ENCODE measurements at regions of chr22 and their contacts with region 1.

Region 1: GRCh38 chr22:35313311-35314121 is 13.8 kb downstream of the TOM1 start:
- DNase-seq: peak in 1 of 2 experiments; percentile 23
- H3K4me3 ChIP-seq: no peak overlapping the region
- H3K27ac ChIP-seq: peak overlapping the region; percentile 74
- H3K4me1 ChIP-seq: peaks cover 64% of the 10 kb centered on the region
- H3K27me3 ChIP-seq: no peaks in the 10 kb centered on the region
- CTCF ChIP-seq: no peak

Region 2: DNA sequence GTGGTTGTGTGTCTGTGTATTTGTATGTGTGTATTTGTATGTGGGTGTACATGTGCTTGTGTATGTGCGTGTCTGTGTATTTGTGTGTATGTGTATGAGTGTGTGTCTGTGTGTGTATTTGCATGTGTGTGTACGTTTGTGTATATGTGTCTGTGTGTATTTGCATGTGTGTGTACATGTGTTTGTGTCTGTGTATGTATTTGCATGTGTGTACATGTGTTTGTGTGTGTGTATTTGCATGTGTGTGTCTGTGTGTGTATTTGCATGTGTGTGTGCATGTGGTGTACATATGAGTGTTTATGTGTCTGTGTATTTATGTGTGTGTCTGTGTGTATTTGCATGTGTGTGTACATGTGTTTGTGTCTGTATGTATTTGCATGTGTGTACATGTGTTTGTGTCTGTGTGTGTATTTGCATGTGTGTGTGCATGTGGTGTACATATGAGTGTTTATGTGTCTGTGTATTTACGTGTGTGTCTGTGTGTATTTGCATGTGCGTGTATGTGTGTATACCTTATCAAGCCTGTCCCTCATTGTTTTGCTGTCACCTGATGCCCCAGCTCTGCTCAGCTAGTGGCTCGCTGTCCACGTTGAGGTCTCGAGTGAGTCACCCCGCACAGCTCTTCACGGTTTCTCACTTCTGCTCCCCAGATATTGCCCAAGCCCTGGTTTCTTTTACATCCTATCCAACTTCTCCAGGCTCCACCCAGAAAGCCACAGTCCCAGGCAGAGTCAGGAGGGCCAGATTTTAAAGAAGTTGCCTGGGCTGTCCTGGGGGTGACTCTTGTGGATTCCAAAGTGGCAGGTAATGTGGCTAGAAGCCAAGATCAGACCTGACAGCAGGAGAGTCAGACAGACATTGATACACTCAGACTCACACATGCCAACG is 288.5 kb after region 1 on chr22:
- CTCF ChIA-PET with region 1: no interaction called
- POLR2A ChIA-PET with region 1: no interaction called
- intact Hi-C with region 1: loop called (anchors 5 kb)
- DNase-seq: peak; percentile 91 to 100
- H3K4me3 ChIP-seq: no peak overlapping the region
- H3K27ac ChIP-seq: peak overlapping the region; percentile 91
- H3K4me1 ChIP-seq: peaks cover 65% of the 10 kb centered on the region
- H3K27me3 ChIP-seq: no peaks in the 10 kb centered on the region
- CTCF ChIP-seq: no peak

Region 3: GRCh38 chr22:36156515-36157419 is 843.3 kb after region 1 on chr22:
- CTCF ChIA-PET with region 1: interaction called, 3 read pairs
- POLR2A ChIA-PET with region 1: interaction called, 10 read pairs
- intact Hi-C with region 1: no loop called
- DNase-seq: peak in 1 of 2 experiments; percentile 52
- H3K4me3 ChIP-seq: 0 out of 2 replicates have a peak overlapping the region, but pooled peaks have one; percentile 1
- H3K27ac ChIP-seq: no peak overlapping the region
- H3K4me1 ChIP-seq: no peaks in the 10 kb centered on the region
- H3K27me3 ChIP-seq: no peaks in the 10 kb centered on the region
- CTCF ChIP-seq: no peak